ENCODE measurements at regions of chr3 and their contacts with region 1.

Region 1: DNA sequence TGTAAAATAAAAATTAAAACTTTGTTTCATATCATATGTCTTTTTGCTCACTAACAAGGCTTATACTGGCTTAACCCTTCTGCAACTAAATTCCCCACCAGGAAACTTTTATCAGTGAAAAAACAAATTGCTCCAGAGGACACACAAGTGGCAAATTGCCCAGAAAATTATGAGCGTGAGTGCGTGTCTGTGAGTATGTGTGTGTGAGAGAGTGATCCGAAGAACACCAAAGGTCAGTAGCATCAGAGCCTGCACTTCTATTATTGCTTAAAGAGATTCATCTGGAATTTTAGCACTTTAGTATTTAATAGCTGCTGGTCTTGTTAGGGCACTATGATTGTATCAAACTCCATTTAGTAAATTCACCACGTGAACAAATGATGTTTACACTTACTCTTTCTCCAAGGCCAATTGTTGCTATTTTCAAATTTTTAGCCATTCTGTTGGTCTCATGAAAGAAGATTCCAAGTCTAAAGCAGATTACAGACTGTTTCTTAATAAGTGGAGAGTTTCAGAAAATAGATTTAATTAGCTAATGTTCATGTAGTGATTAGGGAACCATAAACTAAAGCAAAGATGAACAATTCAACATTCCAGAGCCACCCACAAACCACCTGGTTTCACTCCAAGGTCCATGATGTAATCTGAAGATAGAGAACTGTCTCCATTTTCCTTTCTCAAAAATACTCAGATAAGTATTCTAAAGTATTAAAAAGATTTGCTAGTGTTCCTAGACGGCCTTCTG is 91.1 kb upstream of the IL12A start:
- DNase-seq: no peak
- H3K4me3 ChIP-seq: no peak overlapping the region
- H3K27ac ChIP-seq: no peak overlapping the region
- H3K4me1 ChIP-seq: no peaks in the 10 kb centered on the region
- H3K27me3 ChIP-seq: no peaks in the 10 kb centered on the region
- CTCF ChIP-seq: no peak

Region 2: GRCh38 chr3:160003520-160004128 is 106.1 kb after region 1 on chr3:
- intact Hi-C with region 1: loop called (anchors 10 kb)
- DNase-seq: peak in 3 of 5 donors; percentile 47 to 55 (median 48)
- H3K4me3 ChIP-seq: no peak overlapping the region
- H3K27ac ChIP-seq: no peak overlapping the region
- H3K4me1 ChIP-seq: no peaks in the 10 kb centered on the region
- H3K27me3 ChIP-seq: no peaks in the 10 kb centered on the region
- CTCF ChIP-seq: peak; percentile 46